B cell (primary cell): ENCODE measurements at regions of chr4 and their contacts with region 1.

Region 1: GRCh38 chr4:86961605-86962295 is 26.9 kb downstream of the AFF1 start:
- DNase-seq: peak; percentile 72
- ATAC-seq: peak; percentile 89
- H3K4me3 ChIP-seq: peak overlapping the region in 2 of 5 experiments; percentile 5 to 20
- H3K4me3 Mint-ChIP-seq: peak overlapping the region; percentile 52
- H3K27ac ChIP-seq: peak overlapping the region; percentile 54 to 73
- H3K27ac Mint-ChIP-seq: peak overlapping the region; percentile 22
- H3K4me1 ChIP-seq: peaks cover 59 to 65% of the 10 kb centered on the region in 2 donors
- H3K4me1 Mint-ChIP-seq: peaks cover 48% of the 10 kb centered on the region
- H3K27me3 ChIP-seq: no peaks in the 10 kb centered on the region
- H3K27me3 Mint-ChIP-seq: no peaks in the 10 kb centered on the region
- CTCF ChIP-seq: no peak

Region 2: GRCh38 chr4:85725721-85726170 is 1236.0 kb before region 1 on chr4:
- CTCF ChIA-PET with region 1: no interaction called
- POLR2A ChIA-PET with region 1: interaction called, 11 read pairs
- intact Hi-C with region 1: no loop called
- DNase-seq: peak; percentile 80
- ATAC-seq: peak; percentile 87
- H3K4me3 ChIP-seq: peak overlapping the region in 1 of 5 experiments; percentile 34
- H3K4me3 Mint-ChIP-seq: peak overlapping the region; percentile 66
- H3K27ac ChIP-seq: peak overlapping the region; percentile 74 to 82
- H3K27ac Mint-ChIP-seq: peak overlapping the region; percentile 94
- H3K4me1 ChIP-seq: peaks cover 24 to 26% of the 10 kb centered on the region in 2 donors
- H3K4me1 Mint-ChIP-seq: peaks cover 32% of the 10 kb centered on the region
- H3K27me3 ChIP-seq: no peaks in the 10 kb centered on the region
- H3K27me3 Mint-ChIP-seq: no peaks in the 10 kb centered on the region
- CTCF ChIP-seq: no peak

Region 3: GRCh38 chr4:86977621-86978184 is 16.0 kb after region 1 on chr4:
- CTCF ChIA-PET with region 1: interaction called, 3 read pairs
- POLR2A ChIA-PET with region 1: no interaction called
- intact Hi-C with region 1: loop called (anchors 2 kb)
- DNase-seq: no peak
- ATAC-seq: no peak
- H3K4me3 ChIP-seq: no peak overlapping the region
- H3K4me3 Mint-ChIP-seq: peak overlapping the region; percentile 1
- H3K27ac ChIP-seq: no peak overlapping the region
- H3K27ac Mint-ChIP-seq: no peak overlapping the region
- H3K4me1 ChIP-seq: peaks cover 35 to 37% of the 10 kb centered on the region in 2 donors
- H3K4me1 Mint-ChIP-seq: peaks cover 49% of the 10 kb centered on the region
- H3K27me3 ChIP-seq: no peaks in the 10 kb centered on the region
- H3K27me3 Mint-ChIP-seq: no peaks in the 10 kb centered on the region
- CTCF ChIP-seq: no peak

Region 4: DNA sequence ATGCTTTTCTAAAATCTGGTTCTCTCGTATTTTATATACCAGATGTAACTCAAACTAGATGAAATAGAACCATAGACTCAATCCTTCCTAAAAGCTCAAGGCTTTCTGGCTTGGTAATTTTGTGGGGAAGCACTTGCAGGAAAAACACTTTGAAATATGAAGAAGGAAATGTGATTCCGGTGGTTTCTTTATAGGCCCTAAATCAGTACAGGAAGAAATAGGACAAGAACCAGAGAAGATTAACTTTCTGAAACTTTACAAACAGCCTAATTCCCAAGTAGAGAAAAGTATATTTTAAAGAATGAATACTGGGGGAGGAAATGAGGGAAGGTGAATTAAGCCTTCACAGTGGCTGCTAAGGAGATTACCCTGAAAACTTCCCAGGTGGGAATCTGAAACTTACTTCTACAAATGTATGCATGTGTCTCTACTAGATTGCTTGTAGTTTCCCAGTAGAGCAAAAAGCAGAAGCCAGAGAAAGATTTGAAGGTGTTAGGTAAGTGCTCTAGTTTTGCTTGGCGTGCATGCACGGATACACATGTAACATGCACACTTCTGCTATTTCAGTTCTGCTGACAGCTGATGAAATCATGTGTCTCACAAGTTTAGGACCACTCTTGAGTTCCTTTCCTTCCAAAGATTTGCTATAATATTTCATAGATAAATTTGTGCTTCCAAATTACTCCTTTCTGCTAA is 65.2 kb after region 1 on chr4:
- CTCF ChIA-PET with region 1: no interaction called
- POLR2A ChIA-PET with region 1: no interaction called
- intact Hi-C with region 1: loop called (anchors 2 kb)
- DNase-seq: peak; percentile 82
- ATAC-seq: peak; percentile 96
- H3K4me3 ChIP-seq: no peak overlapping the region
- H3K4me3 Mint-ChIP-seq: peak overlapping the region; percentile 52
- H3K27ac ChIP-seq: peak overlapping the region; percentile 48 to 78
- H3K27ac Mint-ChIP-seq: peak overlapping the region; percentile 80
- H3K4me1 ChIP-seq: peaks cover 40 to 61% of the 10 kb centered on the region in 2 donors
- H3K4me1 Mint-ChIP-seq: peaks cover 52% of the 10 kb centered on the region
- H3K27me3 ChIP-seq: no peaks in the 10 kb centered on the region
- H3K27me3 Mint-ChIP-seq: no peaks in the 10 kb centered on the region
- CTCF ChIP-seq: no peak